Cardiac septum (tissue), 1 donor: ENCODE measurements at regions of chr1 and their contacts with region 1.

Region 1: GRCh38 chr1:2227346-2228153 is 569 bp upstream of the SKI start:
- DNase-seq: peak; percentile 98

Region 2: GRCh38 chr1:2108213-2108876 is 119.2 kb before region 1 on chr1:
- intact Hi-C with region 1: no loop called
- DNase-seq: no peak

Region 3: GRCh38 chr1:2205191-2205952 is 22.2 kb before region 1 on chr1:
- intact Hi-C with region 1: loop called (anchors 2 kb)
- DNase-seq: peak; percentile 99